ENCODE measurements at regions of chr6 and their contacts with region 1.

Region 1: GRCh38 chr6:161748535-161749416 is 474.9 kb upstream of the AGPAT4 start:
- DNase-seq: peak; percentile 75
- H3K4me3 ChIP-seq: peak overlapping the region; percentile 18
- H3K27ac ChIP-seq: no peak overlapping the region
- H3K4me1 ChIP-seq: no peaks in the 10 kb centered on the region
- H3K27me3 ChIP-seq: no peaks in the 10 kb centered on the region
- CTCF ChIP-seq: peak; percentile 75

Region 2: DNA sequence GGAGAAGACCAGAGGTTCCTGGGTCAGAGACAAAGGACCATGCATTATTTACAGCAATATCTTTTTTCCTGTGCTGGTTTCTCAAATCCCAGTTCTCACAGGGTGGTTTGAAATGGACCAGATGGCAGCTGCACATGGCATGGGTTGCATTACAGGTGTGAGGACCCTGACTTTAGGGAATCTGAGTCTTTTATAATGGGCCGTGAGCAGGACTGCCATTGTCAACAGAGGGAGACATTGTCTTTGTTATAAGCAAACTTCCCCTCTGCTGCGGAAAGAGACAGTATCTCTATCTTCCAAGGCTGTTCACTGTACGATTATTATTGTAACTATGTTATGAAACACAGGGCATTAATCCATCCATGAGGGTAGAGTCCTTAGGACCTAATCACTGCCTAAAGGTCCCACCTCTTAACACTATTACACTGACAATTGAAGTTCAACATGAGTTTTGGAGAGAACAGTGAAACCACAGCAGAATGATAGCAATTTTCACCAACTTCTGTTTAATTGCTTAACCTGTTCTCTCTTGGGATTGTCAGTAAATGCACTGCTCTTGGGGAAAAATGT is 318.8 kb before region 1 on chr6:
- CTCF ChIA-PET with region 1: no interaction called
- POLR2A ChIA-PET with region 1: no interaction called
- intact Hi-C with region 1: loop called (anchors 2 kb)
- DNase-seq: no peak
- H3K4me3 ChIP-seq: no peak overlapping the region
- H3K27ac ChIP-seq: no peak overlapping the region
- H3K4me1 ChIP-seq: no peaks in the 10 kb centered on the region
- H3K27me3 ChIP-seq: no peaks in the 10 kb centered on the region
- CTCF ChIP-seq: peak; percentile 45

Region 3: GRCh38 chr6:161557333-161558107 is 191.3 kb before region 1 on chr6:
- CTCF ChIA-PET with region 1: no interaction called
- POLR2A ChIA-PET with region 1: no interaction called
- intact Hi-C with region 1: no loop called
- DNase-seq: no peak
- H3K4me3 ChIP-seq: no peak overlapping the region
- H3K27ac ChIP-seq: no peak overlapping the region
- H3K4me1 ChIP-seq: no peaks in the 10 kb centered on the region
- H3K27me3 ChIP-seq: peaks cover 9% of the 10 kb centered on the region
- CTCF ChIP-seq: no peak

Region 4: GRCh38 chr6:161880056-161880455 is 131.3 kb after region 1 on chr6:
- CTCF ChIA-PET with region 1: no interaction called
- POLR2A ChIA-PET with region 1: no interaction called
- intact Hi-C with region 1: no loop called
- DNase-seq: no peak
- H3K4me3 ChIP-seq: no peak overlapping the region
- H3K27ac ChIP-seq: no peak overlapping the region
- H3K4me1 ChIP-seq: no peaks in the 10 kb centered on the region
- H3K27me3 ChIP-seq: no peaks in the 10 kb centered on the region
- CTCF ChIP-seq: no peak

Region 5: GRCh38 chr6:161922631-161923119 is 173.9 kb after region 1 on chr6:
- CTCF ChIA-PET with region 1: no interaction called
- POLR2A ChIA-PET with region 1: no interaction called
- intact Hi-C with region 1: loop called (anchors 5 kb)
- DNase-seq: peak; percentile 25
- H3K4me3 ChIP-seq: no peak overlapping the region
- H3K27ac ChIP-seq: no peak overlapping the region
- H3K4me1 ChIP-seq: no peaks in the 10 kb centered on the region
- H3K27me3 ChIP-seq: no peaks in the 10 kb centered on the region
- CTCF ChIP-seq: peak; percentile 38